ENCODE measurements at regions of chr15 and their contacts with region 1.

Region 1: GRCh38 chr15:101294731-101295606 is at the start of gene SNRPA1:
- DNase-seq: peak; percentile 85
- H3K4me3 ChIP-seq: peak within 1 kb of the TSS; percentile 99
- CTCF ChIP-seq: no peak

Region 2: GRCh38 chr15:100940767-100941379 is 354.1 kb before region 1 on chr15:
- in situ Hi-C with region 1: no loop called
- DNase-seq: no peak
- H3K4me3 ChIP-seq: no peak overlapping the region
- CTCF ChIP-seq: no peak

Region 3: DNA sequence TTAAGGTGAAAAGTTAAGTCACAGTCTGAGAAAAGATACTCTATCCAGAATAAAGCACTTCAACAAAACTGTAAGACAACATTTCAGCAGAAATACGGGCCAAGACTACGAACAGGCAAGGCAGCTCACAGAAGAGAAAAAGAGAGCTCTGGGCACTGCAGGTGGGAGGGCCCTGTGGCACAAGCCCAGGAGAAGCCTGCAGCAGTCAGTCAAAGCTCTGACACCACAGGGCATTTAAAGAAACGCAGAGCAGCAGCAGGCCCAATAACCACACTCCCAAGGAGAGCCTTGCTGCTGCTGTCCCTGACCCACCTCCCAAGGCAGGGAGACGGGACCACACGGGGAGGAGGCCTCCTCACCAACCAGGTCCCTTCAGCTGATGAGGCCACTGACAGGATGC is 62.3 kb before region 1 on chr15:
- in situ Hi-C with region 1: no loop called
- DNase-seq: no peak
- H3K4me3 ChIP-seq: no peak overlapping the region
- CTCF ChIP-seq: no peak

Region 4: GRCh38 chr15:101333401-101333800 is 38.4 kb after region 1 on chr15:
- in situ Hi-C with region 1: no loop called
- DNase-seq: no peak
- H3K4me3 ChIP-seq: no peak overlapping the region
- CTCF ChIP-seq: no peak

Region 5: GRCh38 chr15:101625980-101626379 is 331.0 kb after region 1 on chr15:
- in situ Hi-C with region 1: loop called (anchors 10 kb)
- DNase-seq: no peak
- H3K4me3 ChIP-seq: no peak overlapping the region
- CTCF ChIP-seq: no peak

Region 6: GRCh38 chr15:101652098-101652782 is 357.3 kb after region 1 on chr15 and contains the start of gene TM2D3:
- in situ Hi-C with region 1: loop called (anchors 5 kb)
- DNase-seq: peak; percentile 71
- H3K4me3 ChIP-seq: peak within 1 kb of the TSS; percentile 71
- CTCF ChIP-seq: peak; percentile 86

Region 7: DNA sequence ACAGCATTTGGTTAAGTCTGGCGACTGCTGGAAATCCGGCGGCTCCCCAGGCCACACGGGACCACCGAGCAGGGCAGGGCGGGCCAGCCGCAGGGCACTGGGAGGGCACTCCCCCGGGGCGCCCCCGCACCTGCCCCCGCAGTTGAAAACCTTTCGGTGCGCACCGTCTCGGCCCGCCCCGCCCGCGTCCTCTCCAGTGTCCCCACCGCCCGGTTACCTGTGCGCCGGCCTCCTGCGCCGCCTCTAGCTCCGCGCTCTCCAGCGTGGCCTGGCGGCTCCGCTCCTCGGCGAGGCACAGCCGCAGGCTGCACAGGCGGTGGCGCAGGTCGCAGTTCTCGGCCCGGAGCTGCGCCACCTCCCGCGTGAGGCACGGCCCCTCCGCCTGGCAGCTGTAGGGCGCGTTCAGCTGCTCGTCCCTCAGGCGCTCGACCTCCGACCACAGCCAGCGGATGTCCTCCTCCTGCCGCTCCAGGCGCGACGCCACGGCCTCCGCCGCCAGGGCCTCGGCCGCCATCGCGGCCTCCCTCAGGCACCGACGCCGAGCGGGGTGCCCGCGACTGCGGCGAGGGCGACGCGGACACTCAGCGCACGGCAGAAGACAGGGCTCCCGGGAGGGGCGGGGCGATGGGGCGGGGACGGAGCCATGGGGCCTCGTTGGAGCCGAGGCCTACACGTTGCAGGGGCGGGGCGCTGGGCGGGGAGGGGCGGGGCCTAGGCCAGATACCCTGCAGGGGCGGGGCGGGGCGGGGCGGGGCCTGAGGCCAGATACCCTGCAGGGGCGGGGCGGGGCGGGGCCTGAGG is 429.1 kb after region 1 on chr15 and contains the start of gene TARS3:
- in situ Hi-C with region 1: loop called (anchors 10 kb)
- DNase-seq: peak; percentile 43
- H3K4me3 ChIP-seq: peak within 1 kb of the TSS; percentile 64
- CTCF ChIP-seq: no peak

Measured in astrocyte of the cerebellum (primary cell).